Activated CD4-positive, alpha-beta memory T cell treated with anti-CD3 and anti-CD28 coated beads for 36 hours (primary cell): ENCODE measurements at regions of chr2 and their contacts with region 1.

Region 1: GRCh38 chr2:113080134-113080533 is 12.4 kb downstream of the IL1F10 start:
- DNase-seq: peak; percentile 74
- H3K4me3 Mint-ChIP-seq: no peak overlapping the region
- H3K27ac Mint-ChIP-seq: no peak overlapping the region
- H3K4me1 Mint-ChIP-seq: peaks cover 11% of the 10 kb centered on the region
- H3K27me3 Mint-ChIP-seq: peaks cover 7% of the 10 kb centered on the region

Region 2: DNA sequence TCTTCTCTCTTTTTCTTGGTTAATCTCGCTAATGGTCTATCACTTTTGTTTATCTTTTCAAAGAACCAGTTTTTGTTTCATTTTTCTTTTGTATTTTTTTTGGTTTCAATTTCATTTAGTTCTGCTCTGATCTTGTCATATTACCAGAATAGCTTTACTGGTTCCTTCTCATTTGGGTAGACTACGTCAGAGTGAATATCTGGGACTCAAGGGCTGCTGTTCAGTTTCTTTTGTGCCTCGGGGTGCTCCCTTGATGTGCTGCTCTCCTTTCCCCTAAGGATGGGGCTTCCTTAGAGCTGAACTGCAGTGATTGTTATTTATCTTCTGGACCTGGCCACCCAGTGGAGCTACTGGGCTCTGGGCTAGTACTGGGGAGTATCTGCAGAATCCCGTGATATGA is 17.9 kb after region 1 on chr2:
- CTCF ChIA-PET with region 1: interaction called, 12 read pairs
- POLR2A ChIA-PET with region 1: no interaction called
- intact Hi-C with region 1: no loop called
- DNase-seq: peak; percentile 58
- H3K4me3 Mint-ChIP-seq: peak overlapping the region; percentile 70
- H3K27ac Mint-ChIP-seq: peak overlapping the region; percentile 88
- H3K4me1 Mint-ChIP-seq: peaks cover 32% of the 10 kb centered on the region
- H3K27me3 Mint-ChIP-seq: peaks cover 5% of the 10 kb centered on the region

Region 3: DNA sequence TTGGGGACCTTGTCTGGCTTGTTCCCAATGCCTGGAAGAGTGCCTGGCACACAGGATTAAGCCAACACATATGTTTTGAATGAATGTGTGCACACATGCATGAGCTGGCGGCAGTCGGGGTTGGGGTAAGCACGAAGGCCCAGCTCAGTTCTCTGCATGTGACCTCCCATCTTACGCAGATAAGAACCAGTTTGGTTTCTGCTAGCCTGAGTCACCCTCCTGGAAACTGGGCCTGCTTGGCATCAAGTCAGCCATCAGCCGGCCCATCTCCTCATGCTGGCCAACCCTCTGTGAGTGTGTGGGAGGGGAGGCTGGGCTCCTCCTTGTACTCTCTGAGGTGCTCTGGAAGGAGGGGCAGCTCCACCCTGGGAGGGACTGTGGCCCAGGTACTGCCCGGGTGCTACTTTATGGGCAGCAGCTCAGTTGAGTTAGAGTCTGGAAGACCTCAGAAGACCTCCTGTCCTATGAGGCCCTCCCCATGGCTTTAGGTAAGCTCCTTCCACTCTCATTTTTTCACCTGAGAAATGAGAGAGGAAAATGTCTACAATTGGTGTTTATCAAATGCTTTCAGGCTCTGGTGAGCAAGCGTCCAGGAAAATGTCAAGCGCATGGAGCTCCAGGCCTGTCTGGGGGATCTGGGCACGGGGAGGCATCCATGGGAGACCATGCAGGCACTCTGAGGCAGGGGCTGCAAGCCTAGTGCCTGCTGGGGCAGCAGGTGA is 37.6 kb after region 1 on chr2:
- CTCF ChIA-PET with region 1: interaction called, 18 read pairs
- POLR2A ChIA-PET with region 1: no interaction called
- intact Hi-C with region 1: loop called (anchors 2 kb)
- DNase-seq: peak; percentile 84
- H3K4me3 Mint-ChIP-seq: peak overlapping the region; percentile 13
- H3K27ac Mint-ChIP-seq: peak overlapping the region; percentile 68
- H3K4me1 Mint-ChIP-seq: peaks cover 23% of the 10 kb centered on the region
- H3K27me3 Mint-ChIP-seq: peaks cover 3% of the 10 kb centered on the region

Region 4: GRCh38 chr2:113173542-113174395 is 93.6 kb after region 1 on chr2 and contains the start of gene PSD4:
- CTCF ChIA-PET with region 1: interaction called, 16 read pairs
- POLR2A ChIA-PET with region 1: interaction called, 3 read pairs
- intact Hi-C with region 1: loop called (anchors 2 kb)
- DNase-seq: peak; percentile 95
- H3K4me3 Mint-ChIP-seq: peak within 1 kb of the TSS; percentile 95
- H3K27ac Mint-ChIP-seq: peak within 1 kb of the TSS; percentile 94
- H3K4me1 Mint-ChIP-seq: peaks cover 74% of the 10 kb centered on the region
- H3K27me3 Mint-ChIP-seq: peaks cover 2% of the 10 kb centered on the region
- total RNA-seq, gene PSD4: 156 to 170 TPM

Region 5: DNA sequence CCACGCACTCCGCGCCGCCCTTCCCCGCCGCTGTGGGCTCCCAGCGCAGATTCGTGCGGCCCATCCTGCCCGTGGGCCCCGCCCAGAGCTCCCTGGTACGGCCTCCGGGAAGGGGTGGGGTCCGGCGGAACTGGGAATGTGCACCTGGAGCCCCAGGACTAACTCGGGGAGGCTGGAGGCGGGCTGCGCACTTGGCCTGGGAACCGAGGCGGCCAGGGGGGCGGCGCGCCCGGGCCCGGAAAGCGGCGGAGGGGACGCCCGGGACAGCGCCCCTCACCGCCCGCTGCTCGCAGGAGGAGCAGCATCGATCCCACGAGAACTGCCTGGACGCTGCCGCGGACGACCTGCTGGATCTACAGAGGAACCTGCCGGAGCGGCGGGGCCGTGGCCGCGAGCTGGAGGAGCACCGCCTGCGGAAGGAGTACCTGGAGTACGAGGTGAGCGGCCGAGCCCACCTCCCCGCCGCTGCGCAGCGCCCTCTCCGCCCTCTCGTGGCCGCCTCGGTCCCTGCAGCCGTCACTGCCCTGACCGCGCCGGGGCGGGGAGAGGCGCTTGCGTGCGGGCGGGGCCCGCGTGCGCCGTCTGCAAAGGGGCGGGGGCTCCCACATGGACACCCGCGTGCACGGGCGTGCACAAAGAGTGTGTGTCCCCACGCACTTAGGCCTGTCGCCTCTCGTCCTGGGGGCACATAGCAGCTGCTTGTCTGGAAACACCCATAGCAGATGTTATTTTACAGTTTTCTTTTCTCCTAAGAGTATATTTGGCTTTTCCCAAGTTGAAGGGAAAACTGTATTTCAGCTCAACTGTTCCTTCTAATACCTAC is 118.9 kb after region 1 on chr2:
- CTCF ChIA-PET with region 1: interaction called, 51 read pairs
- POLR2A ChIA-PET with region 1: no interaction called
- intact Hi-C with region 1: loop called (anchors 1 kb)
- DNase-seq: peak; percentile 85
- H3K4me3 Mint-ChIP-seq: no peak overlapping the region
- H3K27ac Mint-ChIP-seq: peak overlapping the region; percentile 58
- H3K4me1 Mint-ChIP-seq: peaks cover 26% of the 10 kb centered on the region
- H3K27me3 Mint-ChIP-seq: no peaks in the 10 kb centered on the region

Region 6: DNA sequence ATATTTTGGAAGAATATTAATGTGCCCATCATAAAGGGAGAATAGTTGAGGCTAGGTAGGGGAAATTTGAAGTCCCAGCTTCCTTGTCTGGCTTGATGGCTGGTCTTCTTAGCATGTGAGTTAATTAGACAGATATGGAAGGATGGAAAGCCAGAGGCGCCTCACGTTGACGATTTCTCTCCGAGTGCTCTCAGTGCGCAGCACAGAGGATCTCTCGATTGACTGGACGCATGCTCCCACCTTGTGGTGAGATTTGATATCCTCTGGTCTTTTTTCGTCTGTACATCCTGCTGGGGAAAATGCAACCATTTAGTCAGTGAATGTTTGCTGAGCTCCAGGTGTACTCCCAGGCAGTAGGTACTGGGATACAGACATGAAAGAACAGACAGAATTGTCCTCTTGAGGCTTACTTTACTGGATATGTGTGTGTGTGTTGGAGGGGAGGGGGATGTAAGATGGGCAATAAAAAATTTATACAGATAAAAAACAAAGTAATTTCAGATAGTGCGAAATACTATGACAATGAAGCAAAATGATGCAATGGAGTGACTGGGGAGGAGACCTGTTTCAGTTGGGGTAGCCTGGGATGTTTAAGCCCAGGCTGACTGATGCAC is 290.5 kb after region 1 on chr2:
- CTCF ChIA-PET with region 1: interaction called, 6 read pairs
- POLR2A ChIA-PET with region 1: no interaction called
- intact Hi-C with region 1: loop called (anchors 1 kb)
- DNase-seq: peak; percentile 80
- H3K4me3 Mint-ChIP-seq: no peak overlapping the region
- H3K27ac Mint-ChIP-seq: no peak overlapping the region
- H3K4me1 Mint-ChIP-seq: peaks cover 4% of the 10 kb centered on the region
- H3K27me3 Mint-ChIP-seq: peaks cover 5% of the 10 kb centered on the region